ENCODE measurements at regions of chr2 and their contacts with region 1.

Region 1: DNA sequence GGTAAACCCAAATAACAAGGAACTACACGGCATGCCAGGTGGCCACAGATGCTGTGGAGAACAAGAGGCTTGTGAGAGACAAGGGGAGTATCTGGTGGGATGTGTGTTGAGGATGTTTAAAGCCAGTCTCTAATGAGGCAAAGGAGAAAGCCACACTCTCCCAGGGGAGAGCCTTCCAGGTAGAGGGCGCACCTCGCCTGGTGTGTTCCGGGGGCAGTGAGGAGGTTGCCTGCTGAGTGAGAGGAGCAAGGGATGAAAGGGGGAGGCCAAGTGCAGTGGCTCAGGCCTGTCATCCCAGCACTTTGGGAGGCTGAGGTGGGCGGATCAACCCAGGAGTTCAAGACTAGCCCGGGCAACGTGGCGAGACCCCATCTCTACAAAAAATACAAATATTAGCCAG is 16.2 kb downstream of the SAG start:
- DNase-seq: no peak
- ATAC-seq: peak; percentile 84
- H3K4me3 ChIP-seq: no peak overlapping the region
- H3K27ac ChIP-seq: no peak overlapping the region
- H3K4me1 ChIP-seq: peaks cover 13% of the 10 kb centered on the region
- H3K27me3 ChIP-seq: peaks cover 4 to 36% of the 10 kb centered on the region in 2 experiments; a peak in 4 of 5 replicates
- CTCF ChIP-seq: peak; percentile 78
- EP300 ChIP-seq: no peak
- POLR2A ChIP-seq: no peak
- RAD21 ChIP-seq: peak; percentile 66

Region 2: GRCh38 chr2:233234264-233234663 is 89.6 kb before region 1 on chr2:
- CTCF ChIA-PET with region 1: no interaction called
- POLR2A ChIA-PET with region 1: no interaction called
- in situ Hi-C with region 1: no loop called
- intact Hi-C with region 1: no loop called
- DNase-seq: no peak
- ATAC-seq: no peak
- H3K4me3 ChIP-seq: no peak overlapping the region
- H3K27ac ChIP-seq: no peak overlapping the region
- H3K4me1 ChIP-seq: peaks cover 24% of the 10 kb centered on the region
- H3K27me3 ChIP-seq: peaks cover 0 to 3% of the 10 kb centered on the region in 2 experiments; a peak in 1 of 5 replicates
- CTCF ChIP-seq: no peak
- EP300 ChIP-seq: no peak
- POLR2A ChIP-seq: no peak
- RAD21 ChIP-seq: no peak

Region 3: DNA sequence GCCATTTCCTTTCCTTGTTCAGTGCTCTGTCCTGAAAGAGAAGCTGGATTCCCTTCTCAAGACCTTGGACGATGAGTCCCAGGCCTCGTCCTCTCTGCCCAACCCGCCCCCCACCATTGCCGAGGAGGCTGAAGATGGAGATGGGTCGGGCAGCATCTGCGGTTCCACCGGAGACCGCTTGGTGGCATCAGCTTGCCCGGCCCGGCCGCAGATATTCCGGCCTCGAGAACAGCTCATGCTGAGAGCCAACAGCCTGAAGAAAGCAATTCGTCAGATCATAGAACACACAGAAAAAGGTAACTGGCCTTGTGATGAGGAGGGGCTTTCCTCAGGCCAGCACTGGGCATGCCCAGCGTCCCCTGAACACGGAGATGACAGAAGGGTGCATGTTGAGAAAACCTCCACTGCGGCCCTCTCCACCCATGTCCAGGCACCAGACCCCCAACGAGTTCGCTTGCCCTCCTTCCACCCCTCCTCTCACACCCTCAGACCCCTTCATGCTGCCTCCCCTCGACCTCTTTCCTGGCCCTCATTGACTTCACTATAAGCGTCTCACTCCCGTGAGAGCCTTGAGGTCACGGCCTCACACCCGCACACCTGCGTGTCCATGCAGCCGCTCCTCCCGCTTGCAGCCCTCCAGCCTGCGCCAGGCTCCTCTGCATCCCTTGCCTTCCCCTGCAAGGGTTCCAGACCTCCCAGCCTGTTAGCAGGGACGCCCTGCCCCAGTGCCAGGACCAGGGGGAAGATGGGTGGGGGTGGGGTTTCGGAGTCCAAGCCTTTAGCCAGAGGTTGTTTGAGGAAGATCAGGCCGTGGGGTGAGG is 125.4 kb after region 1 on chr2:
- CTCF ChIA-PET with region 1: no interaction called
- POLR2A ChIA-PET with region 1: no interaction called
- in situ Hi-C with region 1: no loop called
- intact Hi-C with region 1: no loop called
- DNase-seq: no peak
- ATAC-seq: peak; percentile 19
- H3K4me3 ChIP-seq: no peak overlapping the region
- H3K27ac ChIP-seq: no peak overlapping the region
- H3K4me1 ChIP-seq: peaks cover 10% of the 10 kb centered on the region
- H3K27me3 ChIP-seq: no peaks in the 10 kb centered on the region
- CTCF ChIP-seq: peak; percentile 47
- EP300 ChIP-seq: no peak
- POLR2A ChIP-seq: no peak
- RAD21 ChIP-seq: no peak

Region 4: GRCh38 chr2:233832869-233833311 is 509.0 kb after region 1 on chr2:
- CTCF ChIA-PET with region 1: no interaction called
- POLR2A ChIA-PET with region 1: no interaction called
- in situ Hi-C with region 1: loop called (anchors 25 kb)
- intact Hi-C with region 1: no loop called
- DNase-seq: peak; percentile 54
- ATAC-seq: peak; percentile 77
- H3K4me3 ChIP-seq: no peak overlapping the region
- H3K27ac ChIP-seq: no peak overlapping the region
- H3K4me1 ChIP-seq: no peaks in the 10 kb centered on the region
- H3K27me3 ChIP-seq: no peaks in the 10 kb centered on the region
- CTCF ChIP-seq: peak; percentile 82
- EP300 ChIP-seq: no peak
- POLR2A ChIP-seq: no peak
- RAD21 ChIP-seq: peak; percentile 79